Activated naive CD4-positive, alpha-beta T cell treated with anti-CD3 and anti-CD28 coated beads, Interleukin-2, amount 10 ng/mL, durations not matched to agents 7 days and 5 days (primary cell): ENCODE measurements at regions of chr16 and their contacts with region 1.

Region 1: DNA sequence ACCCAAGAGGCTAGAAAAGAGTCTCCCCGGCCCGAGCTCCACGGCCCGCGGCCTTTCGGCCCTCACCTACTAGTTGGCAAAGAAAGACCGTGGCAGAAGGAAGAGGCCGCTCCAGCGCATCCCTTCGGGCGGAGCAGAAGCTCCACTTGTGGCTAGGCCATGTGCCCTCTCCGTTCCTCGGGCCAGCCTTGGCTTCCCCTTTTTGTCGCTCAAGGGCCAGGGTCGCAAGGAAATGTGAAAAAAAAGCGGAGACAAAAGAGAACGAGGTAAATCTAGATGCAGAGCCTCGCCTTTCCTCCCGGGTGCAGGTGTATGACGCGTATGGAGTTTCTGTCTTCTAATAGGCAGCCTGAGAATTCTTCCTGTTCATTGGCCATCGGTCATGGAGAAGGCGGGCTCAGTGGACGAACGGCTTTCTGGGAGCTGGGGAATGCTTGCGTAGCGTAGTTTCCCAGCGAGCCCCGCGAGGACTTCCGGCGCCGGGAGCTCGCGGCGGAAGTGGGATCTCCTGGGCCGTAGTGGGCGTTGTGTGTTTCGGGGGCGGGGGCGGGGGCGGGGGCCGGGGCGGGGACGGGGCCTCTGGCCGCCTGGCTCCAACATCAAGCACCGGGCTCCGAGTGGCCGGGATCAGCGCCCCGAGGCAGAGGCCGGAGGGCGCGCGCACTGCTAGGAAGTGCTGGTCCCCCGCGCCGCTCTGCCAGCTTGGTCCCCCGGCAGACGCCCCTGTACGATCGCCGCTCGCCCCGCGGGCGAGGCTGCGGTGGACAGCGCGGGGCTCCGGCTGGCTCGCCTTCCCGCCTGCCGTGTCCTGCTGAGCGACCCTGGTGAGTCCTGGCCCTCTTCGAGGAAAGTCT is at the start of gene ZNF213:
- DNase-seq: peak; percentile 97
- H3K4me3 Mint-ChIP-seq: peak within 1 kb of the TSS; percentile 93
- H3K27ac Mint-ChIP-seq: peak within 1 kb of the TSS; percentile 93
- H3K4me1 Mint-ChIP-seq: peaks cover 38% of the 10 kb centered on the region
- H3K27me3 Mint-ChIP-seq: no peaks in the 10 kb centered on the region

Region 2: DNA sequence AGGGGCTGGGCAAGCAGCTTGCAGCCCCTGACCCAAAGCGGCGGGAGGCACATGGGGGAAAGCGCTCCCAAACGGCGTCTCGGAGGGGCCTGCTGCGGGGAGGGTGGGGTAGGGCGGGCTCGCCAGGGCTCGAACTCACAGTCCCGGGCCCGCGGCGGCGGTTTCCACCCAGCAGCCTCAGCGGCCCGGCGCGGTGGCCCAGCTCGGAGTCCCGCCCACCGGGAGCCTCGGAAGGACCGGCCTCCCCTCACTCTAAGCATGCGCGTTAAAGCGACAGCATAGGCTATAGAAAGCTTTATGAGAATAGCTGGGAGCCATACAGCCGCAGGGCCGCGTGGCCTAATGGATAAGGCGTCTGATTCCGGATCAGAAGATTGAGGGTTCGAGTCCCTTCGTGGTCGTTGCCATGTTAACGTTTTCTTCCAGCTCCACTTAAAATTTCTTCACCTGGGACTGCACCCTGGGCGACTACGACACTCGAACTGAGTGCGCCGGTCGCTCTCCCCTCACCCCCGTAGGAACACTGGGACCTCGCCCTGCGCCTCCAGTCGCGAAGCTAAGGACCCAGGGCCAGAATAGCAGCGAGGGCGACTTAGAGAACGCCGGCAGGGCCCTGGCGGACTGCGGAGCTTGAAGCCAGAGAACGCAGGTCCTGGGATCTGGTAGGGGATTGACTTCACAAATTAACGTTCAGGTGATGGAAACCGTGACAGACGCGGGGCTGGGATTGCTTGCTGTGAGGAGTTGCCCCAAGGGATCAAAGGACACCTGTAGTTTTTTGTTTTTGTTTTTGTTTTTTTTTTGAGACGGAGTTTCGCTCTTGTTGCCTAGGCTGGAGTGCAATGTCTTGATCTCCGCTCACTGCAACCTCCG is 15.8 kb after region 1 on chr16:
- CTCF ChIA-PET with region 1: interaction called, 14 read pairs
- DNase-seq: peak; percentile 97
- H3K4me3 Mint-ChIP-seq: peak overlapping the region; percentile 83
- H3K27ac Mint-ChIP-seq: peak overlapping the region; percentile 93
- H3K4me1 Mint-ChIP-seq: peaks cover 35% of the 10 kb centered on the region
- H3K27me3 Mint-ChIP-seq: peaks cover 53% of the 10 kb centered on the region

Region 3: DNA sequence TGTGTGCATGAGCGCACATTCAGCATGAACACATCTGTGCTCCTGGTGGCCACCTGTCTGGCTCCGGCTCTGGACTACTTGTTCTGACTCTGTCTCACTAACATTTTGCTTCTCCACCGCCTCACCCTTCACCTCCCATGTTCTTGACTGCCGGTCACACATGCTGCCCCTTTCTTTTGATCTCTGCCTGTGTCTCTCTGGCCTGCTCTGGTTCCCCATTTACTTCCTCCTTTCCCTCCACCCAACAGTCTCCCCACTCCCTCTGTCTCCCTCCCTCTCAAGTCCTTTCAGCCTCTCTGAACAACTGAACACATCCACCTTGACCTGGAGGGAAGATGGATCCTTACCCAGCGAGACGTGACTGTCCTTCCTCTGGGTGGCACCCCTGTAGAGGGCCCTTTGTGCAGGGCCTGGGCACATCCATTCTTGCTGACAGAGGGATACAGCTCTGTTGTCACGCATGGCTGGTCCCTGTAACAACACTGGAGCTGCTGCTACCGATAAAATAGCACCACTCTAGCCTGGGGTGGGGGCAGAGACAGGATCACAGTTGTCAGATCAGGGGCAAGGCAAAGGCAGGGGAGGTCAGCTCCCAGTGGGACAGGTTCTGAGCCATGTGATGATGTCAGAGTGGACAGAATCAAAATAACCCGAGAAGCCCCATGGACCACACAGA is 255.0 kb after region 1 on chr16:
- CTCF ChIA-PET with region 1: no interaction called
- DNase-seq: no peak
- H3K4me3 Mint-ChIP-seq: no peak overlapping the region
- H3K27ac Mint-ChIP-seq: no peak overlapping the region
- H3K4me1 Mint-ChIP-seq: peaks cover 1% of the 10 kb centered on the region
- H3K27me3 Mint-ChIP-seq: no peaks in the 10 kb centered on the region